ENCODE measurements at regions of chr2 and their contacts with region 1.

Region 1: GRCh38 chr2:169131587-169132512 is 62.5 kb downstream of the DHRS9 start:
- DNase-seq: no peak
- H3K4me3 ChIP-seq: no peak overlapping the region
- H3K27ac ChIP-seq: no peak overlapping the region
- H3K27me3 ChIP-seq: no peaks in the 10 kb centered on the region
- CTCF ChIP-seq: peak; percentile 79

Region 2: GRCh38 chr2:168961450-168962229 is 170.2 kb before region 1 on chr2:
- CTCF ChIA-PET with region 1: interaction called, 11 read pairs
- POLR2A ChIA-PET with region 1: no interaction called
- DNase-seq: peak; percentile 46
- H3K4me3 ChIP-seq: no peak overlapping the region
- H3K27ac ChIP-seq: no peak overlapping the region
- H3K27me3 ChIP-seq: no peaks in the 10 kb centered on the region
- CTCF ChIP-seq: peak; percentile 82

Region 3: GRCh38 chr2:169513926-169514325 is 382.1 kb after region 1 on chr2:
- CTCF ChIA-PET with region 1: no interaction called
- POLR2A ChIA-PET with region 1: no interaction called
- DNase-seq: no peak
- H3K4me3 ChIP-seq: no peak overlapping the region
- H3K27ac ChIP-seq: no peak overlapping the region
- H3K27me3 ChIP-seq: no peaks in the 10 kb centered on the region
- CTCF ChIP-seq: no peak

Measured in AG04450 (cell line).